Caco-2 (cell line): ENCODE measurements at regions of chr1 and their contacts with region 1.

Region 1: DNA sequence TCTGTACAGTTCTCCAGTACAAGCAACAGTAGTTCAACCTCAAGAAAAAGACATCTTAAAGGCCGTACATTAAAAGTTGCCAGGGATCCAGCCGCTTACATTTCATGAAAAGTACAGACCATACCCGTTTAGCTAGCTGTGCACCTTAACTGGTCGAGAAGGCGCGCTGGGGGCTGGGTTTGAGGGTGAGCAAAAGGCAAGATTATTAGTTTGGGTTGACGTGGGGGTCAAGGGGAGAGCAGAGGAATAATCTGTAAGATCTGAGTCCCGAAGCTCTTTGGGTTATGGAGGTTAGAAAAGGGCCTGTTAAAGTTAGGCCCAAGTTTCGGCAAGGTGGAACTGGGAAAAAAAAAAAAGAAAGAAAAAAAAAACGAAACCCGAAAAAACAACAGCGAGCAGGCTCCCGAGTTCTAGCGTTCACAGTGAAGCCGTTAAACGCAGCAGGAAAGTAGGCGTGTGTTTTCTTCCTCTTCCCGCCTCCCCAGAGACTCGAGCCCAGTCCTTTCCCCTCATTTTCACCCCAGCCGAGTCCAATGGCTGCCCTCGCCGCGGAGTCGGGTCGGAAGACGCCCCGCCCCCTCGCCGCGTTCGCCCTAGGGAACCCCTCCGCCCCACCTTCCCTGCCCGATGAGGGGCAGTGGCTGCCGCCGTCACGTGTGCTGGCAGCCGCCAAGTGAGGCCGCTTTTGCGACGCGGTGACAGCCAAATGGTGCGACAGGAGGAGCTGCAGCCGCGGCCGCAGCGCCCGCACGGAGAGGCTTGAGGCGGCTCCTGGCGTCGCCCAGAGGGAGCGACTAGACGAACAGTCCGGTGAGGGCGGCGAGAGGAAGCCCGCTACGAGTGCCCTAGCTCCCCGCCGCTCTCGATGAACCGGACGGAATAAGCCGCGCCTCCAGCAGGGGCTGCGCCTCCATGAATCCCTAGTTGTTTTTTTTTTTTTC is at the start of gene PKN2:
- DNase-seq: peak; percentile 94 to 95
- H3K4me3 ChIP-seq: peak within 1 kb of the TSS; percentile 88
- H3K4me3 Mint-ChIP-seq: peak within 1 kb of the TSS; percentile 99
- H3K27ac Mint-ChIP-seq: peak within 1 kb of the TSS; percentile 97
- H3K4me1 ChIP-seq: peaks cover 5% of the 10 kb centered on the region; the same call in 1 of the 2 replicates
- H3K4me1 Mint-ChIP-seq: no peaks in the 10 kb centered on the region
- H3K27me3 ChIP-seq: no peaks in the 10 kb centered on the region
- H3K27me3 Mint-ChIP-seq: no peaks in the 10 kb centered on the region
- CTCF ChIP-seq: no peak
- total RNA-seq, gene PKN2: 31.5 and 33.4 TPM in 2 replicates

Region 2: GRCh38 chr1:88608139-88608943 is 75.5 kb before region 1 on chr1:
- CTCF ChIA-PET with region 1: no interaction called
- POLR2A ChIA-PET with region 1: interaction called, 3 read pairs
- intact Hi-C with region 1: loop called (anchors 2 kb)
- DNase-seq: peak in 1 of 2 experiments; percentile 11
- H3K4me3 ChIP-seq: no peak overlapping the region
- H3K4me3 Mint-ChIP-seq: no peak overlapping the region
- H3K27ac Mint-ChIP-seq: no peak overlapping the region
- H3K4me1 ChIP-seq: no peaks in the 10 kb centered on the region
- H3K4me1 Mint-ChIP-seq: no peaks in the 10 kb centered on the region
- H3K27me3 ChIP-seq: no peaks in the 10 kb centered on the region
- H3K27me3 Mint-ChIP-seq: peaks cover 3% of the 10 kb centered on the region
- CTCF ChIP-seq: peak; percentile 36 to 41

Region 3: DNA sequence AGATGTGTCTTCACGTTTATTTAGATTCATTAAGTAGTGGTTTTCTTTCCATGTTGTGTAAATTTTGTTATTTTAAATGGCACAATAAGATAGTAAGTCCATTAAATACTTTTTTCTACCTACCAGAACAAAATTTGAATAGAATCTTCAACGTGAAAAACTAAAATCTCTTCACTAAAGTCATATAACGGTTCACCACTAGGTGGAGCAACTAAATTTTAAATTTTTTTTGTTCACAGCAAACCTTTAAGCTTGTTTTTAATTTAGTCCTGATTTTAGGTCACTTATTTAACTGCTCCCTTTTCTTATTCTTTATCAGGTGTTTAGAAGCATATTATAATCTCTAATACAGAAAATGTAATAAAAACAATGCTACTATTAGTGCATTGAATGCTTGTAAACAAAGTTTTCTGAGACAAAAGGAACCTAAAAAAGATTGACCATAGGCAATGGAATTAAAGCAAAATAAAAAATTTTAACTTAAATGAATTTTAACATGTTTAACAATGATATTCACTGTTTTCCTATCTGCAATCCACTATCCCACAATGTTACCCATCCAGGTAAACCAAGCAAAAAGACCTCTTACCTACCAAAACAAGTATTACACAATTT is 28.0 kb before region 1 on chr1:
- CTCF ChIA-PET with region 1: interaction called, 10 read pairs
- POLR2A ChIA-PET with region 1: no interaction called
- intact Hi-C with region 1: loop called (anchors 2 kb)
- DNase-seq: peak in 1 of 2 experiments; percentile 4
- H3K4me3 ChIP-seq: no peak overlapping the region
- H3K4me3 Mint-ChIP-seq: no peak overlapping the region
- H3K27ac Mint-ChIP-seq: no peak overlapping the region
- H3K4me1 ChIP-seq: no peaks in the 10 kb centered on the region
- H3K4me1 Mint-ChIP-seq: no peaks in the 10 kb centered on the region
- H3K27me3 ChIP-seq: no peaks in the 10 kb centered on the region
- H3K27me3 Mint-ChIP-seq: no peaks in the 10 kb centered on the region
- CTCF ChIP-seq: peak; percentile 26 to 28

Region 4: GRCh38 chr1:88891318-88891950 is 207.6 kb after region 1 on chr1 and contains the start of gene GTF2B:
- CTCF ChIA-PET with region 1: no interaction called
- POLR2A ChIA-PET with region 1: interaction called, 7 read pairs
- intact Hi-C with region 1: loop called (anchors 1 kb)
- DNase-seq: peak; percentile 86 to 90
- H3K4me3 ChIP-seq: peak within 1 kb of the TSS; percentile 65
- H3K4me3 Mint-ChIP-seq: peak within 1 kb of the TSS; percentile 99
- H3K27ac Mint-ChIP-seq: peak within 1 kb of the TSS; percentile 98
- H3K4me1 ChIP-seq: no peaks in the 10 kb centered on the region
- H3K4me1 Mint-ChIP-seq: peaks cover 8% of the 10 kb centered on the region
- H3K27me3 ChIP-seq: no peaks in the 10 kb centered on the region
- H3K27me3 Mint-ChIP-seq: no peaks in the 10 kb centered on the region
- CTCF ChIP-seq: no peak
- total RNA-seq, gene GTF2B: 15.5 and 17.5 TPM in 2 replicates